Prostate gland (tissue), 2 donors: ENCODE measurements at regions of chr12 and their contacts with region 1.

Region 1: DNA sequence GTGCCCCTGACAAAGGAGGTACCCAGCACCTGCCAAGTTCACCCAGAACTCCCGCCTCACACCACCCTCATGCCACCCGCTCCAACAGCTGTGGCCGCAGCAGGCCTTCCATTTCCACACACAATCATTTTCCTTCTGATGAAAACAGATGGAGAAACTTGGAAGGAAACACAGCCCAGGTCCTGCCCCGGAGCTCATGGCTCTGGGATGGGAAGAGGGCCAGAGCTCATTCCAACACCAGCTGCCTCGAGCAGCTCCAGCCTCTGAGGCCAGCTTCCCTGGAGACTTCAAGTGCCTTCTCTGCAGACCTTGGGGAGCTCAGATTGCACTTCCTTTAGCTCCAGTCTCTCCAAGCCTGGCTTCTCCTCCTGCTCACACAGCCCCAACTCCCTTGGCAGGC is 55.1 kb upstream of the CMKLR1 start:
- DNase-seq: no peak
- H3K4me3 ChIP-seq: no peak overlapping the region
- H3K27ac ChIP-seq: no peak overlapping the region
- H3K4me1 ChIP-seq: no peaks in the 10 kb centered on the region
- H3K27me3 ChIP-seq: no peaks in the 10 kb centered on the region
- CTCF ChIP-seq: no peak
- POLR2A ChIP-seq: no peak

Region 2: GRCh38 chr12:108305520-108305919 is 88.7 kb before region 1 on chr12:
- intact Hi-C with region 1: loop called (anchors 10 kb)
- DNase-seq: peak; percentile 21
- H3K4me3 ChIP-seq: no peak overlapping the region
- H3K27ac ChIP-seq: peak overlapping the region; percentile 22 to 31
- H3K4me1 ChIP-seq: no peaks in the 10 kb centered on the region
- H3K27me3 ChIP-seq: no peaks in the 10 kb centered on the region
- CTCF ChIP-seq: no peak
- POLR2A ChIP-seq: no peak